Calu3 (cell line): ENCODE measurements at regions of chr6 and their contacts with region 1.

Region 1: GRCh38 chr6:148746363-148747144 is at the start of gene UST:
- DNase-seq: peak; percentile 60
- H3K4me3 Mint-ChIP-seq: peak within 1 kb of the TSS; percentile 90
- H3K27ac Mint-ChIP-seq: peak within 1 kb of the TSS; percentile 71
- H3K4me1 Mint-ChIP-seq: peaks cover 39% of the 10 kb centered on the region
- H3K27me3 Mint-ChIP-seq: peaks cover 16% of the 10 kb centered on the region
- CTCF ChIP-seq: no peak
- total RNA-seq, gene UST: 2.4 TPM in 2 replicates

Region 2: GRCh38 chr6:148835920-148836441 is 89.4 kb after region 1 on chr6:
- CTCF ChIA-PET with region 1: no interaction called
- intact Hi-C with region 1: loop called (anchors 10 kb)
- DNase-seq: no peak
- H3K4me3 Mint-ChIP-seq: no peak overlapping the region
- H3K27ac Mint-ChIP-seq: no peak overlapping the region
- H3K4me1 Mint-ChIP-seq: peaks cover 18% of the 10 kb centered on the region
- H3K27me3 Mint-ChIP-seq: no peaks in the 10 kb centered on the region
- CTCF ChIP-seq: no peak

Region 3: DNA sequence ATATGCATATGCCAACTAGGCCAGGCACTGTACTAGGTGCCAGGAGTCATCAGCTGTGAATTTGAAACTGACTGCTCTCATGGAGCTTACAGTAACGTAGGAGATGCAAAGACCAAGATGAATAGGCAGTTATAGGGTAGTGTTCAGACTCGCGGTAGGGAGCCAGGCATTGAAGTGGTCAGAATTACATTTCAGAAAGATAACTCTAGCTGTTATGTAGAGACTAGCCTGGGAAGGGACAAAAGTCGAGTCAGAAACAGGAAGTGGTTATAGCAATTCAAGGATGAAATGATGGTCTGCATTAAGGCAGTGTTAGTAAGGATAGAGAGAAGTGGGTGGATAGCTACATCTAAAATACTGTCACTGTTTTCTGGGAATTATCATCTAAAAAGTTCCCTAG is 1059.6 kb after region 1 on chr6:
- CTCF ChIA-PET with region 1: no interaction called
- intact Hi-C with region 1: no loop called
- DNase-seq: no peak
- H3K4me3 Mint-ChIP-seq: no peak overlapping the region
- H3K27ac Mint-ChIP-seq: no peak overlapping the region
- H3K4me1 Mint-ChIP-seq: no peaks in the 10 kb centered on the region
- H3K27me3 Mint-ChIP-seq: no peaks in the 10 kb centered on the region
- CTCF ChIP-seq: no peak